ENCODE measurements at regions of chr2 and their contacts with region 1.

Region 1: GRCh38 chr2:235050992-235051351 is 99.2 kb downstream of the SH3BP4 start:
- DNase-seq: peak; percentile 82
- ATAC-seq: peak; percentile 80
- H3K4me3 ChIP-seq: no peak overlapping the region
- H3K27ac ChIP-seq: peak overlapping the region; percentile 28; the same call in 1 of the 2 replicates
- H3K4me1 ChIP-seq: peaks cover 35 to 52% of the 10 kb centered on the region in 2 experiments
- H3K27me3 ChIP-seq: no peaks in the 10 kb centered on the region
- CTCF ChIP-seq: peak in 2 of 3 experiments; percentile 17; a peak in 1 of 6 replicates
- POLR2A ChIP-seq: no peak
- RAD21 ChIP-seq: peak; percentile 79

Region 2: DNA sequence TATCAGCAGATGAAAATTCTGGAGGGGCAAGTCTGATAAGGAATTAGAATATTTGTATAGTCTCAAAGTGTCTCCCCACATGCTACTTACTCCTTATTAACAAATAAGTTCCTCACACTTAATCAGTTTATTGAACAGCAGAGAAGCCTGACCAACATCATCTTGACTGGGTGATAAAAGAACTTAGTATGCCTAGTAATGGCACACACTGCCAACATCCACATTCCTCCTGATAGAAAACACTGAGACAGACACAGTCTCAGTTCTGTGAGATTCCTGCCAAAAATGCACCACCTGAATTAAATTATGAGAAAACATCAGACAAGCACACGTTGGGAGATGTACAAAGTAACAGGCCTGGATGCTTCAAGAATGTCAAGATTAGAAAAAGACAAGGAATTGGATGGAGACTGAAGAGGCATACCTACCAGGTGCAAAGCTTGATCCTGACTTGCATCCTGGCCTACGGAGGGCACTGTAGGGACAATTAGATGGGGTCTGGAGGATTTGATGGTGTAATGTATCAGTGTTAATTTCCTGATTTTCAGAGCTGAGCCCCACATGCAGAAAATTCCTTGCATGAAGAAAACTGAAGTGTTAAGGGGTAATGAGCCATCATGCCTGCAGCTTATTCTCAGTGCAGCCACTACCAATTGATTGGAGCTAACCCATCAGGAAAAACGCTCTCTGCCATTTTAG is 299.5 kb before region 1 on chr2:
- CTCF ChIA-PET with region 1: interaction called, 4 read pairs
- POLR2A ChIA-PET with region 1: no interaction called
- RAD21 ChIA-PET with region 1: no interaction called
- intact Hi-C with region 1: loop called (anchors 10 kb)
- DNase-seq: no peak
- ATAC-seq: peak; percentile 82
- H3K4me3 ChIP-seq: no peak overlapping the region
- H3K27ac ChIP-seq: no peak overlapping the region
- H3K4me1 ChIP-seq: no peaks in the 10 kb centered on the region
- H3K27me3 ChIP-seq: no peaks in the 10 kb centered on the region
- CTCF ChIP-seq: peak in 2 of 3 experiments; percentile 16 to 20; a peak in 1 of 6 replicates
- POLR2A ChIP-seq: no peak
- RAD21 ChIP-seq: peak; percentile 61

Region 3: GRCh38 chr2:234881413-234882241 is 169.3 kb before region 1 on chr2:
- CTCF ChIA-PET with region 1: interaction called, 19 read pairs
- POLR2A ChIA-PET with region 1: no interaction called
- RAD21 ChIA-PET with region 1: interaction called in 1 of 2 experiments, 3 read pairs
- intact Hi-C with region 1: loop called (anchors 2 kb)
- DNase-seq: peak; percentile 94
- ATAC-seq: peak; percentile 87
- H3K4me3 ChIP-seq: peak overlapping the region; percentile 52
- H3K27ac ChIP-seq: peak overlapping the region; percentile 63
- H3K4me1 ChIP-seq: peaks cover 30 to 37% of the 10 kb centered on the region in 2 experiments
- H3K27me3 ChIP-seq: no peaks in the 10 kb centered on the region
- CTCF ChIP-seq: peak; percentile 75 to 97 (median 95); a peak in 5 of 6 replicates
- POLR2A ChIP-seq: no peak
- RAD21 ChIP-seq: peak; percentile 84

Region 4: DNA sequence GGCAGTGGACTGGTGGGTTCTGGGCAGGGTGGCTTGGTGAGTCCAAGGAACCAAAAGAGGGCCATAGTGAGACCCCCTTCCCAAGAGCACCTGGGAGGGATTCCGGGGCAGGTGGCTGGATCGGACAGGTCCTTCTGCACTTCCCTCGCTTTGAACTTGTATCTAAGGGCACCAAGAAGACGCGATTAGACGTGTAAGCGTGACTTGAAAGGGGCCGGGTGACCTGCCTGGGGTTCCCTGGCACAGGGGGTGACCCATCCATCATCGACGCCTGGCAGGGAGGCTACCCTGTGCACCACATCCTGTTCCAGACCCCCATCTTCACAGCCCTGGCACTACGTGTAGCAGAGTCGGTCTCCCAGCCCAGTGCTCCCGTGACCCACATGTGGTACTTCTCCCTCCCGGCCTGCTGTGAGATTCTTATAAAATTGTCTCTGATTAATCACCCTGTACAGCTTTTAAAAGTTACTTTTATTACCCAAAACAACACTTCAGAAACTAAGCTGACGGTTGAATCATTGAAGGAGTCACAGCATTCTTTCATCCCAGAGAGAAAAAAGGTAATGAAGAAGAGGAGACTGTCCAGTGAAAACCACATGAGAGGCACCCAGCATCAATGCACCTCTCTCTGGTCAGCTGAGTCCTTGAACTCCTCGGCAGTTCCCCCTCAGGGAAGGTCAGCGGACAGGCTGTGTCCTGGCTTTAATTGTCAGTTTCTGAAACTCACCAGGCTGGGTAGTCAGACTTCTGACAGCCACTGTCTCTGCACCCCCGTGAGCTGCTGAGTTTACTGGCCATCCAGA is 86.1 kb before region 1 on chr2:
- CTCF ChIA-PET with region 1: no interaction called
- POLR2A ChIA-PET with region 1: no interaction called
- RAD21 ChIA-PET with region 1: no interaction called
- intact Hi-C with region 1: loop called (anchors 5 kb)
- DNase-seq: peak; percentile 48
- ATAC-seq: peak; percentile 69
- H3K4me3 ChIP-seq: 0 out of 4 replicates have a peak overlapping the region, but pooled peaks of 1 of the 2 experiments have one; percentile 22
- H3K27ac ChIP-seq: peak overlapping the region; percentile 46
- H3K4me1 ChIP-seq: peaks cover 60 to 79% of the 10 kb centered on the region in 2 experiments
- H3K27me3 ChIP-seq: no peaks in the 10 kb centered on the region
- CTCF ChIP-seq: no peak
- POLR2A ChIP-seq: no peak
- RAD21 ChIP-seq: no peak

Region 5: DNA sequence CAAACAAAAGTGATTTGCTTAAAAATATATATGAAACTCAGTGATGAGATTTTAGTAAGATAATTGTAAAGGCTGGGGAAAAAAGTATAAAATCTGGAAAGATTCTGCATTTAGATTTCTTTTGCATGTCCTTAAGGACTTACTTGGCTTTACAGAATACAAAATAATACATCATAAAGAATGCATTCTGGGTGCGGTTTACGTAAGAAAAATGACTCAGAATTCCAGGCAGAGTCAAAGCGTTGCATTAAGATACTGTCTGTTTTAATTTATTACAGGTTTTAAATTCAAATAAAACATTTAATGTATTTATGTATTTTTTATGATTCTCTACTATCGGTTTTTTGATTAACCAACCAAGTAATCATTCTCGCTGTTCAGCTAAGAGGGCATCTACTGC is 78.9 kb after region 1 on chr2:
- CTCF ChIA-PET with region 1: no interaction called
- POLR2A ChIA-PET with region 1: no interaction called
- RAD21 ChIA-PET with region 1: no interaction called
- intact Hi-C with region 1: no loop called
- DNase-seq: no peak
- ATAC-seq: no peak
- H3K4me3 ChIP-seq: no peak overlapping the region
- H3K27ac ChIP-seq: no peak overlapping the region
- H3K4me1 ChIP-seq: no peaks in the 10 kb centered on the region
- H3K27me3 ChIP-seq: no peaks in the 10 kb centered on the region
- CTCF ChIP-seq: no peak
- POLR2A ChIP-seq: no peak
- RAD21 ChIP-seq: no peak